Activated CD4-positive, alpha-beta T cell treated with anti-CD3 and anti-CD28 coated beads, Interleukin-2, amount 10 ng/mL, durations not matched to agents 7 days and 5 days (primary cell): ENCODE measurements at regions of chr10 and their contacts with region 1.

Region 1: DNA sequence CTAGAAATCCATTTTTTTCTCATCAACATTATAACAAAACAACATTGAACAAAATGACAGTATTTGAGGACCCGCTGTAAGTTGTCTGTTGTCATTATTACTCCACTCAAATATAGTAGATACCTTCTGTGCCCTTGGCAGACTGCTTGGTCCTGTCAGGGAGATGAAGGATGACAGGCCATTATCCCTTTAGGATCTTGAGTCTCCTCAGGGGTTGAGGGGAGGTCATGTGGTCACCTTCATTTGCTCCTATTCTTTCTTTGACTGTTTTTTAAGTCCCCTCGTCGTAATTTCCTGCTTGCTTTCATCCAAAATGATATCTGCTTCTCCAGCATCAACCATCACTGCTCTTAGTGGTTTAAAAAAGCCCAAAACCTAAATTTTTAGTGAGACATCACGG is 2.6 kb upstream of the PIP4K2A start:
- DNase-seq: no peak
- H3K4me3 Mint-ChIP-seq: no peak overlapping the region
- H3K27ac Mint-ChIP-seq: no peak overlapping the region
- H3K4me1 Mint-ChIP-seq: peaks cover 11% of the 10 kb centered on the region
- H3K27me3 Mint-ChIP-seq: peaks cover 5% of the 10 kb centered on the region

Region 2: GRCh38 chr10:22611425-22612115 is 105.4 kb before region 1 on chr10:
- CTCF ChIA-PET with region 1: no interaction called
- POLR2A ChIA-PET with region 1: interaction called, 10 read pairs
- DNase-seq: peak; percentile 87
- H3K4me3 Mint-ChIP-seq: peak overlapping the region; percentile 72
- H3K27ac Mint-ChIP-seq: peak overlapping the region; percentile 88
- H3K4me1 Mint-ChIP-seq: peaks cover 88% of the 10 kb centered on the region
- H3K27me3 Mint-ChIP-seq: no peaks in the 10 kb centered on the region